ENCODE measurements at regions of chr21 and their contacts with region 1.

Region 1: DNA sequence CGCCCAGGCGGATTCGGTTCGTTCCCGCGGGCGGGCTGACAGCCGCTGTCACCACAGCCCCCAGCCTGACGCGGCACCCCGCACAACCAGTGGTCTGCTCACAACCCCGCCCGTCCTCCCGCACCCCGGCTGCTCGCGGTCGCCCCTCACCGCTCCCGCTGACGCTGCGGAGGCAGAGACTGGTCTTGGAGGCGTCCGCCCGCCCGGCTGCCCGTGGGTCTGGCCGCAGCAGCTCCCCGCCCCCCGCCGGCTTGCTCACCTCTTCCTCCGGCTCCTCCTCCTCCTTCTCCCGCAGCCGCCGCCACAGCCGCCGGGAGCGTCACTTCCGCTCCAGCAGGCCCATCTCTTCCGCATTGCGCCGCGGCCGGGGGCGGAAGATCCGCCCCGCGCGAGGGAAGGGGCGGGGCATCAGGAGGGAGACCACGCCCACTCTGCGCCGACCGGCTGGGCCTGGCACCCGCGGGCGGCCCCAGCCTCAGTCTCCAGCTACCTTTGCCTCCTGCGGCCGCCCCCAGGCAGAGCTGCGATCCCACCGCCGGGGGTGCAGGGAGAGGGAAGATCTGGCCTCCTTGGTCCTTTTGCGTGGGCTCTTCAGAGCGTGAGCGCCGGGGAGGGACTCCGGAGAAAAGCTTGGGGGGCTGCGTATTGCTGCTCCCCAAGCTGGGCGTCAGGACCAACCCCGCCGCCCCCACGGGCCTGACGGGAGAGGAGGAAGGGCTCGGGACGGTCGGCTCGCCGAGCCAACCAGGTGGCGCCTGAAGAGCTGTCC is at the start of gene SYNJ1:
- DNase-seq: peak; percentile 86 to 96 (median 93)
- ATAC-seq: peak; percentile 86
- H3K4me3 ChIP-seq: peak within 1 kb of the TSS; percentile 86 to 99
- H3K4me3 Mint-ChIP-seq: peak within 1 kb of the TSS; percentile 94
- H3K27ac ChIP-seq: peak within 1 kb of the TSS; percentile 76 to 82
- H3K27ac Mint-ChIP-seq: peak within 1 kb of the TSS; percentile 93
- H3K4me1 ChIP-seq: peaks cover 45% of the 10 kb centered on the region
- H3K4me1 Mint-ChIP-seq: peaks cover 61% of the 10 kb centered on the region
- H3K27me3 ChIP-seq: no peaks in the 10 kb centered on the region
- H3K27me3 Mint-ChIP-seq: no peaks in the 10 kb centered on the region
- CTCF ChIP-seq: no peak
- total RNA-seq, gene SYNJ1: 10.5 to 10.7 TPM

Region 2: GRCh38 chr21:32055305-32055704 is 672.6 kb before region 1 on chr21:
- CTCF ChIA-PET with region 1: no interaction called
- POLR2A ChIA-PET with region 1: no interaction called
- intact Hi-C with region 1: no loop called
- DNase-seq: no peak
- ATAC-seq: no peak
- H3K4me3 ChIP-seq: no peak overlapping the region
- H3K4me3 Mint-ChIP-seq: no peak overlapping the region
- H3K27ac ChIP-seq: no peak overlapping the region
- H3K27ac Mint-ChIP-seq: no peak overlapping the region
- H3K4me1 ChIP-seq: no peaks in the 10 kb centered on the region
- H3K4me1 Mint-ChIP-seq: no peaks in the 10 kb centered on the region
- H3K27me3 ChIP-seq: no peaks in the 10 kb centered on the region
- H3K27me3 Mint-ChIP-seq: peaks cover 8% of the 10 kb centered on the region
- CTCF ChIP-seq: no peak

Region 3: GRCh38 chr21:32687643-32688345 is 40.1 kb before region 1 on chr21:
- CTCF ChIA-PET with region 1: no interaction called
- POLR2A ChIA-PET with region 1: no interaction called
- intact Hi-C with region 1: no loop called
- DNase-seq: peak in 1 of 9 experiments; percentile 15
- ATAC-seq: no peak
- H3K4me3 ChIP-seq: no peak overlapping the region
- H3K4me3 Mint-ChIP-seq: no peak overlapping the region
- H3K27ac ChIP-seq: no peak overlapping the region
- H3K27ac Mint-ChIP-seq: no peak overlapping the region
- H3K4me1 ChIP-seq: no peaks in the 10 kb centered on the region
- H3K4me1 Mint-ChIP-seq: no peaks in the 10 kb centered on the region
- H3K27me3 ChIP-seq: no peaks in the 10 kb centered on the region
- H3K27me3 Mint-ChIP-seq: no peaks in the 10 kb centered on the region
- CTCF ChIP-seq: no peak

Region 4: GRCh38 chr21:32698971-32699693 is 28.7 kb before region 1 on chr21:
- CTCF ChIA-PET with region 1: no interaction called
- POLR2A ChIA-PET with region 1: no interaction called
- intact Hi-C with region 1: no loop called
- DNase-seq: no peak
- ATAC-seq: no peak
- H3K4me3 ChIP-seq: no peak overlapping the region
- H3K4me3 Mint-ChIP-seq: no peak overlapping the region
- H3K27ac ChIP-seq: no peak overlapping the region
- H3K27ac Mint-ChIP-seq: no peak overlapping the region
- H3K4me1 ChIP-seq: no peaks in the 10 kb centered on the region
- H3K4me1 Mint-ChIP-seq: peaks cover 11% of the 10 kb centered on the region
- H3K27me3 ChIP-seq: no peaks in the 10 kb centered on the region
- H3K27me3 Mint-ChIP-seq: no peaks in the 10 kb centered on the region
- CTCF ChIP-seq: no peak

Region 5: DNA sequence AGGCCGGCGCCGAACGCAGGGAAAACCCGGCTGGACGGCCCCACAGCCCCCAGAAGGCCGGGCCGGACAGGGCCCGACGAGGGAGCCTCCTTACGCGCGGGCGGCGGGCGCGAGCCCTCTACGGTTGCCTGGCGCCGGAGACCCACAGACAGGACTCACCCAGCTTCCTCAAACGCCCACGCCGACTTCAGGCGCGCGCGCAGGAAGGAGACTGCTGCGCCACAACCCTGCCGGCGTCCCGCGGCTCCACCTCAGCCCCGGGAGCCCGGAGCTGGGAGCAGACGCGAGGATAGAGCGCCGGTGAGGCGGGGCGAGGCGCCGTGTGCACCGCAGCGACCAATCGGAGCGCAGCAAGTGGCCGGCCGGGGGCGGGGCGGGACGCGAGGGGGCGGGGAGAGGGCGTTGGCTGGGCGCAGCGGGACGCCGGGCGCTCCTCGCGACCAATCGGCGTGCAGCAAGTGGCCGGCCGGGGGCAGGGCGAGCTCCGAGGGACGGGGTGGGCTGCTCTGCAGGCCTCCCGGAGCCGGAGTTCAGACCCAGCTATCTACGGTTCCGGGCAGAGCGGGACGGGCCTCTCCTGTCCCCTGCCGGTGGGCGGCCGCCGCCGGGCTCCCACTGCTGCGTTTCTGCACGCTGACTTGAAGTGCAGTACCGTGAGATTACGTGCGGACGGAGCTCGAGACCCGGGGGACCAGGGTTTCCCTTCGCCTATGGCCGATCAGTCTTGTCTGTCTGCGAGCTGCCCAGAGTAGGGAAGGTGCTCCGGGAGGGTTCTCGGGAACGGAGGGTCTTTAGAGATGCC is 752.0 kb after region 1 on chr21 and contains the start of gene TMEM50B:
- CTCF ChIA-PET with region 1: no interaction called
- POLR2A ChIA-PET with region 1: interaction called, 4 read pairs
- intact Hi-C with region 1: loop called in 1 of 2 experiments (anchors 5 kb)
- DNase-seq: peak; percentile 94 to 98 (median 95)
- ATAC-seq: peak; percentile 87
- H3K4me3 ChIP-seq: peak within 1 kb of the TSS; percentile 79 to 88
- H3K4me3 Mint-ChIP-seq: peak within 1 kb of the TSS; percentile 89
- H3K27ac ChIP-seq: peak within 1 kb of the TSS; percentile 83 to 87
- H3K27ac Mint-ChIP-seq: peak within 1 kb of the TSS; percentile 96
- H3K4me1 ChIP-seq: peaks cover 13% of the 10 kb centered on the region
- H3K4me1 Mint-ChIP-seq: peaks cover 28% of the 10 kb centered on the region
- H3K27me3 ChIP-seq: no peaks in the 10 kb centered on the region
- H3K27me3 Mint-ChIP-seq: no peaks in the 10 kb centered on the region
- CTCF ChIP-seq: peak; percentile 31
- total RNA-seq, gene TMEM50B: 32.6 to 34.0 TPM

Region 6: DNA sequence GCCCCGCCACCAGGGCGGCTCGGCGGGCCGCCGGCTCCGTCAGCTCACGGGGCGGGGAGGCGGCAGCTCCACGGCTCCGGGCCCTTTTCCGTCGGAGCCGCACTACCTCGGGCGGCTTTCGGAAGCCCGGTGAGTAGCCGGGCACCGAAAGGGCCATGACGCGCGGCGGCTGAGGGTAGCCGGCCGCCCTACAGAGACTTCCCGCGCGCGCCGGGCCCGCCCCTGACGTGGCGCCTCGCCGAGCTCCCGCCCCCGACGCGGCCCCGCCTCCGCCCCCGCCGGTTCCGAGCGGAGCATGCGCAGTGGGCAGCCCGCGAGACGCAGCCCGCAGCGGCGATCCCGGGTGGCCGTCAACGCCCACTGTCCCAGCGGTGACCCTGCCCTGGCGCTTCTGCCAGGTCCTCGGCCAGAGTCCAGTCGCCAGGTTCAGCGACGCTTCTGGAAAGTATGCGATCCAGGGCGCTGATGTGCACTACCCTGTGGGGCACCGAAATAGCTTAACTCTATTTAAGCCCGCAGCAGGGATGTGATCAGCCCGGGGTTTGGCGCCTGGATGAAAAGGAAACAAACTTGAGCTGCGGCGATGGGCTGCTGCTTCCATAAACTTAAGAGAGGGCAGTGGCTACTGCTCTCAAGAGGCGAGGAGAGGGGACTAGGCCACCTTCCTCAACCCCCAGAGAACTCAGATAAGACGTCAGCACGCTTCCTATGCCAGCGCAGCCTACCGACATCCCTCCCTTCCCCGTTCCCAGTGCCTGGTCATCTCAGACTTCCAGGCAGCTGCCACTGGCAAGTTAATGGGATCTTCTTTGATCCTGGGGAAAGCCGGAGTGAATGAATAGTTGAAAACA is 860.8 kb after region 1 on chr21 and contains the start of gene DONSON:
- CTCF ChIA-PET with region 1: no interaction called
- POLR2A ChIA-PET with region 1: no interaction called
- intact Hi-C with region 1: loop called in 1 of 2 experiments (anchors 2 kb)
- DNase-seq: peak; percentile 72 to 94 (median 87)
- ATAC-seq: peak; percentile 94
- H3K4me3 ChIP-seq: peak within 1 kb of the TSS; percentile 82 to 91
- H3K4me3 Mint-ChIP-seq: peak within 1 kb of the TSS; percentile 95
- H3K27ac ChIP-seq: peak within 1 kb of the TSS; percentile 53 to 61
- H3K27ac Mint-ChIP-seq: peak within 1 kb of the TSS; percentile 87
- H3K4me1 ChIP-seq: peaks cover 14% of the 10 kb centered on the region
- H3K4me1 Mint-ChIP-seq: peaks cover 16% of the 10 kb centered on the region
- H3K27me3 ChIP-seq: no peaks in the 10 kb centered on the region
- H3K27me3 Mint-ChIP-seq: no peaks in the 10 kb centered on the region
- CTCF ChIP-seq: no peak
- total RNA-seq, gene DONSON: 11.0 to 11.9 TPM